Activated T-helper 1 cell treated with anti-CD3 and anti-CD28 coated beads, Interleukin-12 subunit alpha, Interleukin-12 subunit beta, Interleukin-2, Interleukin-4 antibody, amounts not matched to agents 30 ng/mL and 10 ng/mL and 1 ng/mL, durations not matched to agents 14 hours and 24 hours and 36 hours (primary cell): ENCODE measurements at regions of chrX and their contacts with region 1.

Region 1: GRCh38 chrX:39162322-39162735 is 361.1 kb downstream of the MID1IP1 start:
- DNase-seq: no peak
- H3K4me3 Mint-ChIP-seq: peak overlapping the region; percentile 22
- H3K27ac Mint-ChIP-seq: peak overlapping the region; percentile 71
- H3K4me1 Mint-ChIP-seq: peaks cover 45% of the 10 kb centered on the region
- H3K27me3 Mint-ChIP-seq: peaks cover 2% of the 10 kb centered on the region

Region 2: GRCh38 chrX:39196192-39197102 is 34.1 kb after region 1 on chrX:
- intact Hi-C with region 1: loop called (anchors 1 kb)
- DNase-seq: peak; percentile 44
- H3K4me3 Mint-ChIP-seq: peak overlapping the region; percentile 58
- H3K27ac Mint-ChIP-seq: peak overlapping the region; percentile 87
- H3K4me1 Mint-ChIP-seq: peaks cover 52% of the 10 kb centered on the region
- H3K27me3 Mint-ChIP-seq: no peaks in the 10 kb centered on the region

Region 3: GRCh38 chrX:39201305-39201990 is 39.1 kb after region 1 on chrX:
- intact Hi-C with region 1: loop called (anchors 1 kb)
- DNase-seq: no peak
- H3K4me3 Mint-ChIP-seq: no peak overlapping the region
- H3K27ac Mint-ChIP-seq: peak overlapping the region; percentile 79
- H3K4me1 Mint-ChIP-seq: peaks cover 82% of the 10 kb centered on the region
- H3K27me3 Mint-ChIP-seq: no peaks in the 10 kb centered on the region